ENCODE measurements at regions of chr15 and their contacts with region 1.

Region 1: GRCh38 chr15:31745841-31746240 is 284.5 kb upstream of the CHRNA7 start:
- DNase-seq: no peak
- ATAC-seq: no peak
- H3K4me3 ChIP-seq: no peak overlapping the region
- H3K27ac ChIP-seq: no peak overlapping the region
- H3K4me1 ChIP-seq: no peaks in the 10 kb centered on the region
- H3K27me3 ChIP-seq: no peaks in the 10 kb centered on the region

Region 2: GRCh38 chr15:31782016-31782770 is 36.4 kb after region 1 on chr15:
- intact Hi-C with region 1: loop called in 1 of 2 experiments (anchors 5 kb)
- DNase-seq: no peak
- ATAC-seq: no peak
- H3K4me3 ChIP-seq: no peak overlapping the region
- H3K27ac ChIP-seq: no peak overlapping the region
- H3K4me1 ChIP-seq: no peaks in the 10 kb centered on the region
- H3K27me3 ChIP-seq: no peaks in the 10 kb centered on the region

Region 3: DNA sequence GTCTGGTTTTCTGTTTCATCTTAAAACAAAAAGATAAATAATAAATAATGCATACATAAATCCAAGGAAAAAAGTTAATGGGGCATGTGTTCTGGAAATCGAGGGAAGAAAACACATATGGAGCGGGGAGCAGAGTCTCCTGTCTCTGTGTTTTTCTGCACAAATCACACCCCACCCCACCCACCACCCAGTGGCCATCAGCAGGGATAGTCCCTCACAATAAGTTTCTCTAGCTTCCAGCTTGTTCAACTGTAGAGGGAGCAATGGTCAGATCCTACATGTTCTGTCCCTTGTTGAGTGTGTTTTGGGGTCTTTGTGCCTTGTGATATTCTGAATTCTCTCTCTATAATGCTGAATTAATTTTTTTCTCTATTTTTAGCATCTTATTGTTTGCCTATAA is 257.7 kb after region 1 on chr15:
- intact Hi-C with region 1: no loop called
- DNase-seq: no peak
- ATAC-seq: no peak
- H3K4me3 ChIP-seq: no peak overlapping the region
- H3K27ac ChIP-seq: no peak overlapping the region
- H3K4me1 ChIP-seq: no peaks in the 10 kb centered on the region
- H3K27me3 ChIP-seq: no peaks in the 10 kb centered on the region

Region 4: DNA sequence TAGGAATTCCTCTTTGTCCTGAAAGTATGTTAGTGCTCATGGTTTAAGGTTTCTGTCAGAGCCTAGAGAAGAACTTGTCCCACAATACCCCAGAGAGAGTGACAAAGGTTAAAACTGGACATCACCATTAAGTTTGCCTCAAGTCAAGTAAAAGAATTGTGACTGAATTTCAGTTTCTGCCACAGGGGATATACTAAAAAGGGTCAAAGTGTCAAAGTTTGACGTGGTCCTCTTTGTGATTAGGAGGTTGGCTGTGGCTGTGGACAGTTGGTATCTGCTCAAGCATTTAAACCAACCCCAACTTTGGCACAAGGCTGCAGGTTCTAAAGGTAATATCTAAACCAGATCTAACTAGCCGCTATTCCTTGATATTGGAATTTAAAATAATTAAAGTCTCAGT is 1422.6 kb after region 1 on chr15:
- intact Hi-C with region 1: no loop called
- DNase-seq: no peak
- ATAC-seq: no peak
- H3K4me3 ChIP-seq: no peak overlapping the region
- H3K27ac ChIP-seq: no peak overlapping the region
- H3K4me1 ChIP-seq: no peaks in the 10 kb centered on the region
- H3K27me3 ChIP-seq: no peaks in the 10 kb centered on the region

Measured in aorta (tissue), 5 donors.